ENCODE measurements at regions of chr6 and their contacts with region 1.

Region 1: GRCh38 chr6:17706580-17707370 is at the start of gene NUP153:
- DNase-seq: peak; percentile 94 to 100 (median 96)
- ATAC-seq: peak; percentile 78
- H3K4me3 ChIP-seq: peak within 1 kb of the TSS; percentile 80
- H3K27ac ChIP-seq: peak within 1 kb of the TSS; percentile 98
- H3K4me1 ChIP-seq: peaks cover 16 to 21% of the 10 kb centered on the region in 2 experiments
- H3K27me3 ChIP-seq: no peaks in the 10 kb centered on the region
- CTCF ChIP-seq: 0 out of 6 replicates have a peak, but pooled peaks of 1 of the 3 experiments have one; percentile 1
- EP300 ChIP-seq: peak; percentile 72
- POLR2A ChIP-seq: peak; percentile 83
- RAD21 ChIP-seq: peak; percentile 3 to 18; a peak in 1 of 4 replicates
- polyA plus RNA-seq, gene NUP153: 21.9 to 31.8 TPM

Region 2: GRCh38 chr6:17688481-17688880 is 18.3 kb before region 1 on chr6:
- CTCF ChIA-PET with region 1: no interaction called
- POLR2A ChIA-PET with region 1: interaction called, 164 read pairs
- in situ Hi-C with region 1: no loop called
- intact Hi-C with region 1: no loop called
- DNase-seq: no peak
- ATAC-seq: no peak
- H3K4me3 ChIP-seq: no peak overlapping the region
- H3K27ac ChIP-seq: no peak overlapping the region
- H3K4me1 ChIP-seq: peaks cover 3% of the 10 kb centered on the region in 2 experiments; a peak in 2 of 5 replicates
- H3K27me3 ChIP-seq: no peaks in the 10 kb centered on the region
- CTCF ChIP-seq: no peak
- EP300 ChIP-seq: no peak
- POLR2A ChIP-seq: no peak
- RAD21 ChIP-seq: no peak

Region 3: DNA sequence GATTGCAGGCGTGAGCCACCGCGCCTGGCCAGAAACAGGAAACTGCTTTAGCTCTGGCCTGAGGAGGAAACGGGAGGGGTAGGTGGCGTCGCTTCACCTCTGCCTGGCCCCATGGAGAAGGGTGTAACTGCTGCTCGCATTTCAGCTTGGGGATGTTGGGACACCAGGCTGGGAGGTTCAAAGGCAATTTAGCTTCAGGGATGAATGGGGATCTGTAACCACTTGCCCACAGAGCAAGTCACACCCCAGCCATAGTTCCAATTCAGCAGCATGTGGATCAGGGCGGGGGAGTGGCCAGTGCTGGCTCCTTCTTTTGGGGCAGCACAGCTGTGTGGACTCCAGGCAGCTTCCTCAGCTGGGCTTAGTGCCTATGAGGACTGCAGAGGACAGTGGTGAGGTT is 34.7 kb after region 1 on chr6:
- CTCF ChIA-PET with region 1: no interaction called
- POLR2A ChIA-PET with region 1: interaction called, 11 read pairs
- in situ Hi-C with region 1: no loop called
- intact Hi-C with region 1: no loop called
- DNase-seq: no peak
- ATAC-seq: peak; percentile 71
- H3K4me3 ChIP-seq: no peak overlapping the region
- H3K27ac ChIP-seq: no peak overlapping the region
- H3K4me1 ChIP-seq: peaks cover 2 to 4% of the 10 kb centered on the region in 2 experiments; a peak in 4 of 5 replicates
- H3K27me3 ChIP-seq: no peaks in the 10 kb centered on the region
- CTCF ChIP-seq: no peak
- EP300 ChIP-seq: no peak
- POLR2A ChIP-seq: no peak
- RAD21 ChIP-seq: no peak

Region 4: DNA sequence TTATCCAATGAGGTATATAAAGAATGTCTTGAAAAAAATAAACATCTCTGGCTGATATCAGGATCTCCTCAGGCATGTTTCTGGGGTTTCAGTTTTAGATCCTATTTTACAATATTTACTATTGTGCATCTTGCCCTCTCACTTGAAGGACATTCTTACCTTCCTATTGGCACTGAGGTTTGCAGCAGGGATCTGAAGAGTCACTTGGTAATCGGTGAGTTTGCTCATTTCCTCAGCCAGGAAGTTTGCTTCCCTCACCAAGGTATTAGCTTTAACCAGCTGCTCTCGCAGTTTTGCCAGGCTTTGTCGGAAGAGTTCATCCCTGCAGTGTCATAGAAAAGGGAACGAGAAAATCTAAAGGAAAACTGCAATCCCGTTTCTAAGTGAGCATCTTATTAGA is 101.8 kb after region 1 on chr6:
- CTCF ChIA-PET with region 1: no interaction called
- POLR2A ChIA-PET with region 1: interaction called, 5 read pairs
- in situ Hi-C with region 1: no loop called
- intact Hi-C with region 1: loop called (anchors 1 kb)
- DNase-seq: no peak
- ATAC-seq: no peak
- H3K4me3 ChIP-seq: no peak overlapping the region
- H3K27ac ChIP-seq: no peak overlapping the region
- H3K4me1 ChIP-seq: no peaks in the 10 kb centered on the region
- H3K27me3 ChIP-seq: no peaks in the 10 kb centered on the region
- CTCF ChIP-seq: no peak
- EP300 ChIP-seq: no peak
- POLR2A ChIP-seq: no peak
- RAD21 ChIP-seq: no peak

Region 5: DNA sequence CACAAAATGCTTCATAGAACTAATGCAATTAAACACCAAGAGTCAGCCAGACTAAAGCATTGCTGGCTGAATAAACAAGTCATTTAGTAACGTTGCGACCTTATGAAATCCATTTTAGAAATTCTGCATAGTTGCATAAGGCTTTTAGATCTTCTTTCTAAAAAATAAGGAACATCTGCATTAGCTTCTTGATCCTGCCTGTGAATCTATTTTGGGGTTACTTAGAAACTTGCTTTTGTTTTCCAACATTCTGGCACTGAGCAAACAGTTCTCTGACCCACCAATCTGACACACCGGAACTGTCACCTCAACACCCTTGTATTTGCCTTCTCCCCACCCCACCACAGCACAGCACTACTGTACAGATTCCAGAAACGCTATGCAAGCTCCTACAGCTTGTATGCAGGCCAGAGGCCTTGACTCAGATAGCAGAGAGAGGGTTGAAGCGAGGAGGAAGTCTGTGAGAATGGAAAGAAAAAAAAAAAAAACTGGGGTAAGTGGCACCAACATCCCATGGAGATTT is 225.6 kb after region 1 on chr6:
- CTCF ChIA-PET with region 1: no interaction called
- POLR2A ChIA-PET with region 1: no interaction called
- in situ Hi-C with region 1: no loop called
- intact Hi-C with region 1: no loop called
- DNase-seq: peak in 3 of 4 experiments; percentile 35 to 82 (median 71)
- ATAC-seq: peak; percentile 84
- H3K4me3 ChIP-seq: no peak overlapping the region
- H3K27ac ChIP-seq: peak overlapping the region; percentile 55; the same call in 2 of the 3 replicates
- H3K4me1 ChIP-seq: peaks cover 31 to 66% of the 10 kb centered on the region in 2 experiments
- H3K27me3 ChIP-seq: no peaks in the 10 kb centered on the region
- CTCF ChIP-seq: no peak
- EP300 ChIP-seq: peak; percentile 53; the same call in 1 of the 2 replicates
- POLR2A ChIP-seq: no peak
- RAD21 ChIP-seq: peak in 1 of 2 experiments; percentile 45; a peak in 2 of 4 replicates

Region 6: GRCh38 chr6:18155150-18155863 is 448.5 kb after region 1 on chr6 and contains the start of gene KDM1B:
- CTCF ChIA-PET with region 1: no interaction called
- POLR2A ChIA-PET with region 1: no interaction called
- in situ Hi-C with region 1: no loop called
- intact Hi-C with region 1: loop called (anchors 10 kb)
- DNase-seq: peak; percentile 99 to 100 (median 100)
- ATAC-seq: peak; percentile 96
- H3K4me3 ChIP-seq: peak within 1 kb of the TSS; percentile 74
- H3K27ac ChIP-seq: peak within 1 kb of the TSS; percentile 86
- H3K4me1 ChIP-seq: peaks cover 14 to 23% of the 10 kb centered on the region in 2 experiments
- H3K27me3 ChIP-seq: no peaks in the 10 kb centered on the region
- CTCF ChIP-seq: no peak
- EP300 ChIP-seq: no peak
- POLR2A ChIP-seq: no peak; the same call in 1 of the 2 replicates
- RAD21 ChIP-seq: no peak
- polyA plus RNA-seq, gene KDM1B: 1.4 to 1.7 TPM

Measured in K562 (cell line).